HepG2 (cell line): ENCODE measurements at regions of chr10 and their contacts with region 1.

Region 1: DNA sequence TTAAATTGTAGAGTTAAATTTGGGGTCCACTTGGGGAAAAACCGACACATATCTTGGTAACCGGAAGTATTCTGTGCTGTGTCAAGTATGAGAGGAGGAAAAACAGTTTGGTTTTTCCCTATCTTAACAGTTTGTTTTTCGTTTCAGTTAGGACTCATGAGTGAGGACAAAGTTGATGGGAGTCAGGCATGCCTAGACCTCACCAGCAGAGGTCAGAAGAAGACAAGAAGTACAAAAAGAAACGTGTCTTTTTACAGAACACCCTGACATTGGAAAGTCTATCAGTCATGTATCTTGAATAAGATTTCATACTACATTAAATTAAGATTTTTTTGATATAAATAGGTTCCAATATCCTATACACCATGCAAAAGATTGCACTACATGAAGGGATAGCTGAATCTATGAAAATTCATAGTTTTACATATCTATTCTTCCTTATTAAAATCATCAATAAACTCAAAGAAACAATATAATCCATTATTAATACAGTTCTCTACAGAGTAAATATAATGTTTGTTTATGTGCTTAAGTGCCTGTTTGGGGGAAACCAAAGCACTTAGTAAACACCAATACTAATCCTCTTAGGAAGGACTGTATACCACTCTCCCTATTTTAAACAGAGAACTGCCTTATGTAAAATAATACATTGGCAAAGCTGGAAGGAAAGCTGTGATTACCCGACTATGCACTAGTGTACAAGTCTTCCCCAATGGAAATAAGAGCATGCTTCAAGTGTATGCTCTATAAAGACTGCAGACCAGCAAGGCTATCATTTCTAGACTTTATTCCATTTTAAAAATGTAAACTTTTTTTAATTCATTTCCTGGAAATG is 95.6 kb downstream of the USP6NL start:
- DNase-seq: peak; percentile 68
- ATAC-seq: peak; percentile 82
- H3K4me3 ChIP-seq: no peak overlapping the region
- H3K27ac ChIP-seq: no peak overlapping the region
- H3K4me1 ChIP-seq: peaks cover 6% of the 10 kb centered on the region; the same call in 1 of the 2 replicates
- H3K27me3 ChIP-seq: no peaks in the 10 kb centered on the region
- CTCF ChIP-seq: peak; percentile 85
- EP300 ChIP-seq: no peak
- POLR2A ChIP-seq: no peak
- RAD21 ChIP-seq: peak; percentile 84

Region 2: DNA sequence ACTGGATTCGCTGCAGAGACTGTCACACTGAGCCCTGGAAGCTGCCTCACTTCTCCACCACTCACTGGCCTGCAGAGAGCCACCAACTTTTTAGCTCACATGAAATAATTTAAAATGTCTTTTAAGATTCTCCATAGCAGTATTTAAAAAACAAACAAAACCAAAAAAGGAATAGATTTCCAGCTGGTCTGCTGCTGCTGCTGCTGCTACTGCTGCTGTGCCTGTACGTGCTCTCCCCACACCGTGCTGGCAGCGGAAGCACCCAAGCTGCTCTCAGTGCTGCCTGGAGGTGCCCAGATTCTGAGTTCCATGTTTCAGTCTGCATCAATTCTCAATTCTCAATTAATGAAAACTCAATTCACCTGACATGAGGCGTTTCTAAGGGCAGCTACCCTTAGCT is 50.4 kb before region 1 on chr10:
- CTCF ChIA-PET with region 1: no interaction called
- POLR2A ChIA-PET with region 1: no interaction called
- in situ Hi-C with region 1: no loop called
- intact Hi-C with region 1: no loop called
- DNase-seq: no peak
- ATAC-seq: no peak
- H3K4me3 ChIP-seq: no peak overlapping the region
- H3K27ac ChIP-seq: no peak overlapping the region
- H3K4me1 ChIP-seq: no peaks in the 10 kb centered on the region
- H3K27me3 ChIP-seq: no peaks in the 10 kb centered on the region
- CTCF ChIP-seq: no peak
- EP300 ChIP-seq: no peak
- POLR2A ChIP-seq: no peak
- RAD21 ChIP-seq: no peak

Region 3: DNA sequence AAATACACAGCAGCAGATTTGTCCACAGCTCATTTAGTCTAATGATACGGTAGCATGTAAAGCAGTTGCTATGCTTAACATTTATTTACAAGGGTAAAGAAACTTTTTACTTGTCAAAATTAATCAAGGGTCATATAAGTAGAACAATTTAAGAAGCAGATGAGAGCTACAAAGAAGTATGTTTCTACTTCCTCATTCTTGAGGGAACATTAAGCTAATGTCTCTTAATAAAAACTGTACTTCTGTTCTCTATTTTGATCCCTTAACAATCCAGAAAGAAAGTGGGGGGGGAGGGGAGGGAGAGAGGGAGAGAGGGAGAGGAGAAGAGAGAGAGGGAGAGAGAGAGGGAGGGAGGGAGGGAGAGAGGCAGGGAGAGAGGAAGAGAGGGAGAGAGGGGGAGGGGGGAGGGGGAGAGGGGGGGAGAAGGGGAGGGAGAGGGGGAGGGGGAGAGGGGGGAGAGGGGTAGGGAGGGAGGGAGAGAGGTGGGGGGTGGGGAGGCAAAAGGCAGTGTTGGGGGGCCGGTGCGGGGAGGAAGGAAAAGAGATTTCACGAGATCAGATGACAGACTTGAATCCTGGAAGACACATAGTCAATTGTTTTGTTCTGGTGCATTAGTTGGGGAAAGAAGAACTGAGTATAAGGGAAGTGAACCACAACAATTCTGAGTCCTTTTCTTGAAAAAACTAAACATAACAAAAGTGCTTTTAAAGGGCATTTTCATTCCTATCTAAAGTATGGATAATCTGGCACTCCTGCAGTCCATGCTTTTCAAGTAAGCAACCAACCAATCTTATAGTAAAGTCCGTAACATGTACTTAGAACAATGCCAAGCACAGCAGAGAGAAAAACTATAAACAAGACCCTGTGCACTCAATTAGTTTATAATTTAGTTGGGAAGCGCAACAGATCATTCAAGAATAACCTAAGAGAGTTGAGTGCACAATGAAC is 32.3 kb before region 1 on chr10:
- CTCF ChIA-PET with region 1: no interaction called
- POLR2A ChIA-PET with region 1: no interaction called
- in situ Hi-C with region 1: no loop called
- intact Hi-C with region 1: no loop called
- DNase-seq: no peak
- ATAC-seq: no peak
- H3K4me3 ChIP-seq: no peak overlapping the region
- H3K27ac ChIP-seq: no peak overlapping the region
- H3K4me1 ChIP-seq: no peaks in the 10 kb centered on the region
- H3K27me3 ChIP-seq: no peaks in the 10 kb centered on the region
- CTCF ChIP-seq: no peak
- EP300 ChIP-seq: no peak
- POLR2A ChIP-seq: no peak
- RAD21 ChIP-seq: no peak

Region 4: GRCh38 chr10:11611248-11612020 is 95.6 kb after region 1 on chr10 and contains the start of gene USP6NL:
- CTCF ChIA-PET with region 1: no interaction called
- POLR2A ChIA-PET with region 1: no interaction called
- in situ Hi-C with region 1: loop called (anchors 5 kb)
- intact Hi-C with region 1: loop called (anchors 2 kb)
- DNase-seq: peak; percentile 70
- ATAC-seq: peak; percentile 88
- H3K4me3 ChIP-seq: peak within 1 kb of the TSS; percentile 90 to 96 (median 92)
- H3K27ac ChIP-seq: peak within 1 kb of the TSS; percentile 82
- H3K4me1 ChIP-seq: peaks cover 67% of the 10 kb centered on the region
- H3K27me3 ChIP-seq: no peaks in the 10 kb centered on the region; a peak in 1 of 5 replicates
- CTCF ChIP-seq: no peak
- EP300 ChIP-seq: no peak
- POLR2A ChIP-seq: peak; percentile 43 to 69
- RAD21 ChIP-seq: no peak; the same call in 1 of the 2 replicates
- total RNA-seq, gene USP6NL: 22.9 and 26.2 TPM in 2 replicates

Region 5: GRCh38 chr10:11713186-11713743 is 197.5 kb after region 1 on chr10:
- CTCF ChIA-PET with region 1: no interaction called
- POLR2A ChIA-PET with region 1: interaction called, 4 read pairs
- in situ Hi-C with region 1: no loop called
- intact Hi-C with region 1: loop called (anchors 2 kb)
- DNase-seq: no peak
- ATAC-seq: no peak
- H3K4me3 ChIP-seq: no peak overlapping the region
- H3K27ac ChIP-seq: no peak overlapping the region
- H3K4me1 ChIP-seq: peaks cover 84% of the 10 kb centered on the region
- H3K27me3 ChIP-seq: no peaks in the 10 kb centered on the region
- CTCF ChIP-seq: no peak
- EP300 ChIP-seq: no peak
- POLR2A ChIP-seq: no peak
- RAD21 ChIP-seq: no peak

Region 6: DNA sequence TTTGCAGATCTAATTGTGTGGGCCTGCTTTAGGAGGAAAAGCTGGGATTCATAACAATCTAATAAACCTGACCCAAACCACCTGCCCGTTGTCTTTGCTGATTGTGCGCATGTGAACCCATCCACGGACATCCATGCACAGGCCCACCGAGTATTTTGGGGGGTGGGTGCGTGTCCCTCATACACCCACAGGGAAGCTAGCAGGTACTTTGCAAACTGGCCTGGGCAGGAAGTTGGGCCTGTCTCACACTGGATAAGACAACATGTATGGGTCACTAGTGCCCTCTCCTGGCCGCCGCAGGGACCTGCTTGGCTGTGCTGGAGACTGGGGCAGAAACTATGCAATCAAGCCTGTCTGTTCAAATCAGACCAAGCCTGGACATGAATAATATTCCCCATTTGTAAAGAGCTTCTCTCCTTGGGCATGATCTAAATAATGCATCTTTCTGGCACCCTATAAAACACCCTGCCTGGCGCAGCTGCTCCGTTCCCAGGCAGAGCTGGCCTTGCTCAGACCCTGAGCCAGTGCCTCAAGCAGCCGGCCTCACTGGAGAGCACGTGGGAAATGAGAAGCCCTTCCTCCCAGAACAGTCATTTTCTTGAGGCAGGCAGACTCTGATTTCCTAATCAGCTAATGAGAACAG is 242.1 kb after region 1 on chr10:
- CTCF ChIA-PET with region 1: interaction called, 61 read pairs
- POLR2A ChIA-PET with region 1: interaction called, 3 read pairs
- in situ Hi-C with region 1: loop called (anchors 5 kb)
- intact Hi-C with region 1: loop called (anchors 1 kb)
- DNase-seq: peak; percentile 83
- ATAC-seq: peak; percentile 96
- H3K4me3 ChIP-seq: peak overlapping the region; percentile 43 to 68 (median 45); a peak in 5 of 6 replicates
- H3K27ac ChIP-seq: peak overlapping the region; percentile 74
- H3K4me1 ChIP-seq: peaks cover 55% of the 10 kb centered on the region
- H3K27me3 ChIP-seq: peaks cover 0 to 28% of the 10 kb centered on the region in 2 experiments; a peak in 3 of 5 replicates
- CTCF ChIP-seq: peak; percentile 97
- EP300 ChIP-seq: no peak
- POLR2A ChIP-seq: no peak
- RAD21 ChIP-seq: peak; percentile 94